Activated CD4-positive, alpha-beta T cell treated with anti-CD3 and anti-CD28 coated beads, Interleukin-2, amount 10 ng/mL, durations not matched to agents 7 days and 5 days (primary cell): ENCODE measurements at regions of chr10 and their contacts with region 1.

Region 1: GRCh38 chr10:6151087-6151977 is 51.4 kb upstream of the PFKFB3 start:
- DNase-seq: peak; percentile 63
- H3K4me3 Mint-ChIP-seq: peak overlapping the region; percentile 59
- H3K27ac Mint-ChIP-seq: peak overlapping the region; percentile 89
- H3K4me1 Mint-ChIP-seq: peaks cover 67% of the 10 kb centered on the region
- H3K27me3 Mint-ChIP-seq: no peaks in the 10 kb centered on the region

Region 2: DNA sequence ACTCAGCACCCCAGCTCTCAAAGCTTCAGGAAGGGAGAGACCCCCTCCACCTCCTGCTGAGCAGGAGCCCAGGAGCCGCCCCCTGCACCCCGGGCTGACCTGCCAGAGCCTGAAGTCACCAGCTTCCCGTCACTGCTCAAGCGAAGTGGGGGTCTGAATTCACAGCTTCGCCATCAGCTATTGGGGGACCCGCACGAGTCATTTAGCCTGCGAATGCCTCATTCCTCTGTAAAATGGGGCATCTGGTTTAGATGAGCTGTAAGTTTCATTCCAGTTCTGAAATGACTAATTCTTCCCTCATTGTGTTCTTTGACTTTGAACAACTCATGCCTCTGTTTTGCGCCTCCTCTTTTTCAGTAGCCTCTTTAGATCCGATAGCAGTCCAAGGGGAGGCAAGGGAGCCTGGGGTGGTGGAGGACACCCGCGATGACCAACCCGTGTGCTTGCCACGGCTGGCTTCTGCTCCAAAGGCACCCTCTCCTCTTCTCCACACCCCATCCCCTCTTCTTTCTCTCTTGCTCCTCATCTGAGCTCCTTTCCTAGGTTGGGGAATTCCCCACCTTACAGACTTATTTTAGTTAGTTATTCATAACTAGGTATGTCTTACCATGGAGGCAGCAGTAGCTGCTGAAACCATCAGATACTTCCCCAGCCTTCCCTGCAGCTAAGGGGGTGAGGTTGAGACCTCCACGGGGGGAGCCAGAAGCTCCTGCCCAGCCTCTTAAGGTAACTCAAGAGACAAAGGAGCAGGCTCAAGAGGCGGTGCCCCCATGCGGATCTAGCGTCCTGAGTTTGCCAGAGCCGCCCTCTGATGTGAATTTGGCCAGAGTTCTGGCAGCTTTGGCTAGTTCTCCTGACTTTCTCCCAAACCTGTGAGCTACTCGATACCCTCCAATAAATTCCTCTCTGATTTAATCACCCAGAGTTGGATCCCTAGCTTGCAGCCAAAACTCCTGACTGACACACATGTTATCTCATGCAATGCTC is 14.8 kb before region 1 on chr10:
- CTCF ChIA-PET with region 1: interaction called, 15 read pairs
- POLR2A ChIA-PET with region 1: no interaction called
- DNase-seq: peak; percentile 24
- H3K4me3 Mint-ChIP-seq: peak overlapping the region; percentile 29
- H3K27ac Mint-ChIP-seq: no peak overlapping the region
- H3K4me1 Mint-ChIP-seq: peaks cover 53% of the 10 kb centered on the region
- H3K27me3 Mint-ChIP-seq: peaks cover 4% of the 10 kb centered on the region